ENCODE measurements at regions of chr1 and their contacts with region 1.

Region 1: DNA sequence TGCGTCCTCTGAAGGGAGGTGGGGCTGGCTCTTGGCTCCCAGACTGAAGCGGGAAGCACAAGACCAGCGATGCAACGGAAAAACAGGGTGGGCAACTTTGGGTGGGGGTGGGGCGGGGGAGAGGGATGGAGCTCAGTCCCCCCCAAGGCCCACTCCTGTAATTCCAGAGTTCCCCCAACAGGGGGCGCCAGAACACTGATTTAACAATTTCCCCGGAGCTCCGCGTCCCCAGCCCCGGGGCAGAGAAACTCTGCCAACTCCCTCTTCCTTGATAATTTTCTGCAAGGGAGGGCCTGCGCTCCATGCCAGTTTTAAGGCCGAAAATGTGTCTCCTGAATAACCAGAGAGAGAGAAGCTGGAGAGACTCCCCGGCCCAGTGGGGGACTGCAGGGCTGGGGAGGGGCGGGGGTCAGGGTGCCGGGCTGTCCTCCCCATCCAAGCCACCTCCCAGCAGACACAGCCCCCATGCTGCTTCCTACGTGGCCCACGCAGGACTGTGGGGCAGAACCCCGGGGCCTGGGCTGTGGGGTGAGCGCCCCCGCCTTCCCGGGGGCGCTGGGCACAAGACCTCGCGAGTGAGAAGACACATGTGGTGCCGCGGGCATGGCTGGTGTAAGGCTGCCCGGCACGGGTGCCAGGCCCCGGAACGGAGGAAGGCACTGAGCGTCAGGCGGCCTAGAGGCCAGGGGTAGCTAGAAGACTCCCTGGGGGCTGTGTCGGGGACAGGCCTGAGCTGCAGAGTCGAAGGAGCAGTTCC is 51.4 kb downstream of the KIF21B start:
- DNase-seq: peak; percentile 83
- ATAC-seq: peak; percentile 57
- H3K4me3 Mint-ChIP-seq: no peak overlapping the region
- H3K27ac Mint-ChIP-seq: no peak overlapping the region
- H3K4me1 Mint-ChIP-seq: no peaks in the 10 kb centered on the region; the same call in 1 of the 2 replicates
- H3K27me3 Mint-ChIP-seq: no peaks in the 10 kb centered on the region
- CTCF ChIP-seq: peak; percentile 100

Region 2: DNA sequence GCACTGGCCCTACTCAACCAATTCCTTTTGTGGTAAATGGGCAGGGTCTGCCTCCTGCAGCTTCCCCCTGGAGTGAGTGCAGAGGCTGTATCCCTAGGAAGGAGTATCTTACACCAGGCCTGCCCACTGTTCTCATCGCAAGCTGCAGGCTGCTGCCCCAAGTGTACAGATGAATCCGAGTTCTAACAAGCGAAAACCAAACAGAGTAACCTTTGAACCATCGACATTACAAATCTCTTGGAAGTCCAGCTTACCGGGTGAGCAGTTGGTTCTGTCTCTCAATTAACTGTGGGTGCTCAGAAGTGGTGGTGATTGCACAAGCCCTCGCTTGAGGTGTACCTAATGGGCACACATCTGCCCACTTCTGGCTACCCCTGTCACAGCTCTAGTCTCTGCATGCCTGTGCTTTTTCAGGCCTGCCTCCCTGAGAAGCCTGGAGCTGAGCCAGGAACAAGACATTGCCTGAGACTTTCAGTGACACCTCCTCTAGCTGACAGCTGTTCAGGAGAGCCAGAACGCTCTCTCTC is 54.8 kb before region 1 on chr1:
- CTCF ChIA-PET with region 1: interaction called, 33 read pairs
- POLR2A ChIA-PET with region 1: no interaction called
- DNase-seq: no peak
- ATAC-seq: no peak
- H3K4me3 Mint-ChIP-seq: no peak overlapping the region
- H3K27ac Mint-ChIP-seq: no peak overlapping the region
- H3K4me1 Mint-ChIP-seq: peaks cover 5% of the 10 kb centered on the region; the same call in 1 of the 2 replicates
- H3K27me3 Mint-ChIP-seq: no peaks in the 10 kb centered on the region
- CTCF ChIP-seq: no peak

Region 3: DNA sequence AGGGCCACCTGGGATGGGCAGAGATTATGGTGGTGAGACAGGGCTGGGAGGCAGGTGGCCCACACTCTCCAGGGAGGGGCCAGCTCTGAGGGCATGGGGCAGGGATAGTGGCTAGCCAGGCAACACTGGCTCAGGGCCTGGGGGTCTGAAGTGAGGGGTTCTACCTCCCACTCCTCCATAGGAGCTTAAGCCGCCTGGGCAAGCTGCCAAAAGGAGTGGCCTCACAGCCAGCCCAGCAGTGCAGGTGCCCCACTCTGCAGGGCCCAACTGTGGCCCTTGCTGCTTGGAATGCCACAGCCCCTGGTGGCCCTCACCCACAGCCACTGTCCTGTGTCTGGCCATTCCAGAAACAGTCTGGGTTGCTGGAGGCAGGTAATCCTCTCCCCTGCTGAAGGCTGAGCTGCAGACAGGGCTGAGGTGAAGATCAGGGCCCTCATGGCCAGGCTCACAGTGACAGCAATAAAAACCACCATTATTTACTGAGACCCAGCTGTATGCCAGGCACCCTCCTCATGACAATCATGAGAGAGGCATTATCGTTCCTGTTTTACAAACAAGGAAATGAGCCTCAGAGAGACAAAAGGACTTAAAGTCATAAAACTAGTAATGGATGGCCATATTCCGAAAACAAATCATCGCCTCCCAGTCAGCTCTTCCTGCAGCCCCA is 20.4 kb after region 1 on chr1:
- CTCF ChIA-PET with region 1: interaction called, 15 read pairs
- POLR2A ChIA-PET with region 1: no interaction called
- DNase-seq: no peak
- ATAC-seq: no peak
- H3K4me3 Mint-ChIP-seq: no peak overlapping the region
- H3K27ac Mint-ChIP-seq: no peak overlapping the region
- H3K4me1 Mint-ChIP-seq: no peaks in the 10 kb centered on the region
- H3K27me3 Mint-ChIP-seq: no peaks in the 10 kb centered on the region; the same call in 1 of the 2 replicates
- CTCF ChIP-seq: no peak

Region 4: GRCh38 chr1:201042779-201043461 is 70.8 kb after region 1 on chr1:
- CTCF ChIA-PET with region 1: interaction called, 94 read pairs
- POLR2A ChIA-PET with region 1: no interaction called
- DNase-seq: peak; percentile 70
- ATAC-seq: peak; percentile 87
- H3K4me3 Mint-ChIP-seq: no peak overlapping the region
- H3K27ac Mint-ChIP-seq: no peak overlapping the region
- H3K4me1 Mint-ChIP-seq: no peaks in the 10 kb centered on the region
- H3K27me3 Mint-ChIP-seq: no peaks in the 10 kb centered on the region; the same call in 1 of the 2 replicates
- CTCF ChIP-seq: peak; percentile 83

Region 5: DNA sequence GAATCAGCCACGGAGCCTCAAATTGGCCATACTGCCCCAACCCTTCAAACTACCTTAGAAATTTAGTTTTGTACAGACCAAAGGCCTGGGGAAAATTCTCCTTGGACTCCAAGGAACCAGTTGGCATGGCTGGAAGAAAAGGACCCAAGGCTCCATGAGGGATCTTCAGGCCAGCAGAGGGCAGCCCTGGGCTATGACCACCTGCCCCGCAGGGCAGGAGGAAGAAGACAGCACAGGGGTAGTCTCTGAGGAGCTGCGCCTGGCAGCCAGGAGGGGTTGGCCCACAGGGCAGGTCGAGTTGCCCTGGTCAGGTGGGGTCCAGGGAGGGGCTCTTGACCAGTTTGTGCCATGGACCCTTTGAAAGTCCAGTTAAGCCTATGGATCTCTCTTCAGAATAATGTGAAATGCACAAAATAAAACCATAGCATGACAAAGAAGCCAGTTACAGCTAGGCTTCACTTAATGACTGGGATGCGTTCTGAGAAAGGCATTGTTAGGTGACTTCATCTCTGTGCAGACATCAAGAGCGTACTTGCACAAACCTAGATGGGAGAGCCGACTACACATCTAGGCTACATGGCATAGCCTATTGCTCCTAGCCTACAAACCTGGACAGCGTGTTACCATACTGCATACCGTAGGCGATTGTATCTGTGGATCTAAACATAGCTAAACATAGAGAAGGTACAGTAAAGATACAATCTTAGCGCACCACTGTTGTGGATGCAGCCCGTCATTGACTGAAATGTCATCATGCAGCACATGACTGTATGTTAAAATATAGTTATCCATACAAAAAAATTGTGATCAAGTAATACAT is 114.0 kb after region 1 on chr1:
- CTCF ChIA-PET with region 1: interaction called, 36 read pairs
- POLR2A ChIA-PET with region 1: no interaction called
- DNase-seq: peak; percentile 76
- ATAC-seq: peak; percentile 97
- H3K4me3 Mint-ChIP-seq: no peak overlapping the region
- H3K27ac Mint-ChIP-seq: no peak overlapping the region
- H3K4me1 Mint-ChIP-seq: peaks cover 6% of the 10 kb centered on the region; the same call in 1 of the 2 replicates
- H3K27me3 Mint-ChIP-seq: no peaks in the 10 kb centered on the region
- CTCF ChIP-seq: peak; percentile 35; the same call in 1 of the 2 replicates

Measured in WTC11 (cell line).